T-cell (primary cell): ENCODE measurements at regions of chr6 and their contacts with region 1.

Region 1: DNA sequence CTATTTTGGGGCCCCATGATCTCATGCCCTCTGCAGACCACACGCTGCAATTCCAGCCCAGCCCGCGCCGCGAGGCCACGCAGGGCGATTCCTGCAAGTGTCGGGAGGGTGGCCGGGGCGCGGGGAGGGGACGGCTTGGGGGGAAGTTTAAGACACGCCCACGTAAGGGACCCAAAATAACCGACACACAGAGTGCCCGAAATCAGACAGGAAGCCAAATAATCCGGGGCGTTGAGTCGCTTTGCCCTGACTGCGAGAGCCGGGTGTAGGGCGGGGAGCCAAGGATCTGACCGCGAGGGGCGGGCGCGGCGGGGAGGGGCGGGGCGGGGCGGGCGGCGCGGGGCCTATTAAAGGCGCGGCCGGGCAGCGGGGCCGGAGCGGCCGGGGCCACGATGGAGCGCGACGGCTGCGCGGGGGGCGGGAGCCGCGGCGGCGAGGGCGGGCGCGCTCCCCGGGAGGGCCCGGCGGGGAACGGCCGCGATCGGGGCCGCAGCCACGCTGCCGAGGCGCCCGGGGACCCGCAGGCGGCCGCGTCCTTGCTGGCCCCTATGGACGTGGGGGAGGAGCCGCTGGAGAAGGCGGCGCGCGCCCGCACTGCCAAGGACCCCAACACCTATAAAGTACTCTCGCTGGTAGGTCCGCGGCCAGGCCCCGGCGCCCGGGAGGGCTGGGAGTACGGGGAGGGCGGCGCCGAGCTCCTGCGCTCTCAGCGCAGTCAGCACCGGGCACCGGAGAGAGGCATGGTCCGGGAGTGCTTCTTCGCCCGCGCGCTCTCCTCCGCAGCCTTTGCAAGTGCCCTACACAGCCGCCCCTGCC is at the start of gene ENPP1:
- DNase-seq: peak in 33 of 35 experiments; percentile 4 to 52 (median 16)
- ATAC-seq: peak; percentile 68 to 82 (median 76)
- H3K4me3 ChIP-seq: peak within 1 kb of the TSS; percentile 52 to 58
- H3K4me3 Mint-ChIP-seq: peak within 1 kb of the TSS; percentile 82 to 88 (median 88)
- H3K27ac ChIP-seq: no peak within 1 kb of the TSS
- H3K27ac Mint-ChIP-seq: peak within 1 kb of the TSS in 1 of 2 donors; percentile 40
- H3K4me1 ChIP-seq: peaks cover 10% of the 10 kb centered on the region in 2 experiments
- H3K4me1 Mint-ChIP-seq: peaks cover 14 to 27% (median 24%) of the 10 kb centered on the region in 3 donors
- H3K27me3 ChIP-seq: peaks cover 11 to 30% of the 10 kb centered on the region in 2 experiments
- H3K27me3 Mint-ChIP-seq: peaks cover 28 to 36% of the 10 kb centered on the region in 2 donors
- total RNA-seq, gene ENPP1: 0.15 to 0.47 (median 0.35) TPM

Region 2: DNA sequence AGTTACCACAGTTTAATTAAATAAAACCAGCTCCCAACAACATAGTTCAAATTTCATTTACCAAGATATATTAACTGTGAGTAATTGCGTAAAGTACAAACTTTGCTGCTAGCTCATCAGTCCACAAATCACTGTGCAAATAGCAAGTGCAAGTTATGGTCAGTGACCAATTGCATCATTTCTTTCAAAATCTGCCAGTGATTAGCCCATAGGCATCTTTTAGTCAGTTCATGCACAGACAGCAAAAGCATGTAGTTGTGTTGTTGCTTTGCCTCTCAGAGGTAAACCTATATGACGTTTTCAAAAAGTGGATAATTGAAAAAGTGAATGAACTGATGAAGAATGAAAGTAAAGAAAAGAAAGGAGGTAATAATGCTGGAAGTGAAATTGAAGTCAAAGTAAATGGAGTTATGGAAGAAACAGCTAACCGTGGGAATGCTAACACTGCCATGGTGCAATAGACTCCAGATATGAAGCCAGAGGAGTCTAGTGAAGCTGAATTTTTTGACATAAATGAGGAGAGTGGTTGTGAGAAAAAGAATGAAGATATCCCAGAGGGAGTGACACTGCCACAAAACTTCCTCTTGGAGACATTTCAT is 36.5 kb after region 1 on chr6:
- CTCF ChIA-PET with region 1: interaction called in 1 of 2 experiments, 4 read pairs
- POLR2A ChIA-PET with region 1: interaction called in 1 of 2 experiments, 12 read pairs
- DNase-seq: no peak
- ATAC-seq: no peak
- H3K4me3 ChIP-seq: no peak overlapping the region
- H3K4me3 Mint-ChIP-seq: no peak overlapping the region
- H3K27ac ChIP-seq: no peak overlapping the region
- H3K27ac Mint-ChIP-seq: no peak overlapping the region
- H3K4me1 ChIP-seq: no peaks in the 10 kb centered on the region
- H3K4me1 Mint-ChIP-seq: no peaks in the 10 kb centered on the region
- H3K27me3 ChIP-seq: no peaks in the 10 kb centered on the region
- H3K27me3 Mint-ChIP-seq: peaks cover 17 to 25% of the 10 kb centered on the region in 2 donors